Heart left ventricle (tissue), 16 donors: ENCODE measurements at regions of chr10 and their contacts with region 1.

Region 1: GRCh38 chr10:59580026-59580863 is 129.4 kb downstream of the SLC16A9 start:
- DNase-seq: no peak
- ATAC-seq: peak in 2 of 4 donors; percentile 54 to 57
- H3K4me3 ChIP-seq: no peak overlapping the region
- H3K27ac ChIP-seq: peak overlapping the region in 4 of 12 donors; percentile 21 to 51 (median 36)
- H3K4me1 ChIP-seq: peaks cover 0 to 21% (median 0%) of the 10 kb centered on the region in 12 donors
- H3K27me3 ChIP-seq: no peaks in the 10 kb centered on the region
- CTCF ChIP-seq: peak; percentile 31 to 71 (median 46)
- POLR2A ChIP-seq: no peak

Region 2: DNA sequence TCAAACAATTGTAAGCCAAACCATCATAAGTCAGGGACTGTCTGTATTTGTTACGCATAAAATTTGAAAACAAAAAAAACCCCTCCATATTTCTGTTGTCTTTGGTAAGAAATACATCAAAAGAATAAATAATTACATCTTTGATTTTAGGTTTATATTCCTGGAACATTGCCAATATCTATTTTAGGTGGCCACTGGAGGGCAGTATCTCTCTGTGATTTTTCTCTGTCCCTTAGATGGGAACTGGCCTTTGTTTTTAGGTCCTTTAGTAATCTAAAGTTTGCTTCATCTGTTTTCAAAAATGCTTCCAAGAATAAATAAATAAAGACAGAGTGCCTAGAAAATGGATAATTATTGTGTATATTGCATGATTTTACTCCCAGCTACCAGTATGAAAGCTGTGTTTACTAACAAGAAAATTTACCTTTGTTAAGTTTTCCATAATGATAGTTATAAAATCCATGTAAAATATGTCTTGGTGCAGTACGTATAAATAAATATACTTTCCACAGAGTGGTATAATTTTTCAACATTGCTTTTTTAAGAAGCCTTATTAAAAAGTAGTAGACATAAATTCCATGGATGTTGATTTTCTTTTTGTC is 339.6 kb before region 1 on chr10:
- intact Hi-C with region 1: loop called (anchors 1 to 5 kb)
- DNase-seq: peak in 1 of 5 donors; percentile 9
- ATAC-seq: no peak
- H3K4me3 ChIP-seq: no peak overlapping the region
- H3K27ac ChIP-seq: no peak overlapping the region
- H3K4me1 ChIP-seq: peaks cover 0 to 4% (median 0%) of the 10 kb centered on the region in 12 donors
- H3K27me3 ChIP-seq: no peaks in the 10 kb centered on the region
- CTCF ChIP-seq: peak; percentile 45 to 85 (median 66)
- POLR2A ChIP-seq: no peak

Region 3: GRCh38 chr10:59362144-59362958 is 217.9 kb before region 1 on chr10 and contains the start of gene FAM13C:
- intact Hi-C with region 1: loop called in 1 of 10 experiments (anchors 10 kb)
- DNase-seq: peak; percentile 55 to 83 (median 67)
- ATAC-seq: peak; percentile 63 to 90 (median 82)
- H3K4me3 ChIP-seq: peak within 1 kb of the TSS; percentile 47 to 78 (median 64)
- H3K27ac ChIP-seq: peak within 1 kb of the TSS; percentile 64 to 94 (median 86)
- H3K4me1 ChIP-seq: peaks cover 6 to 60% (median 33%) of the 10 kb centered on the region in 12 donors
- H3K27me3 ChIP-seq: peaks cover 0 to 4% (median 0%) of the 10 kb centered on the region in 9 donors
- CTCF ChIP-seq: peak in 1 of 12 donors; percentile 5
- POLR2A ChIP-seq: no peak
- total RNA-seq, gene FAM13C: 3.6 to 12.4 (median 8.5) TPM

Region 4: DNA sequence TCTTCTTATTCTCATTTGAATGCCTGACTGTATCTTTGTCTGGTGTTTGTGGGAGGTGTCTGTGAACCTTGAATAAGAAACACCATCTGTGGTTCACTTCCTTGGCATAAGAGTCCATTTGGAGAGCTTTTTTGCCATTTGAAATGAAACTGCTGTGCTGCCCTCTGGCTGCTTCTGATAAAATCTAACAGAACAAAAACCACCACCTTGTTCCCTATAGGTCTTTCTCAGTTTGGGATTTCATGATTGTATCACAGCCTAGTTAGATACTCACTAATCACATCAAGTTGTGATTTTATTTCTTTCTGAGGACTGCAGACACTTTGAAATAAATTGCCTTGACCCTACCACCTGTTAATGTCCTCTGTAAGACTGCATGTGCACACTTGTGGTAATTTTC is 115.2 kb before region 1 on chr10:
- intact Hi-C with region 1: loop called in 2 of 10 experiments (anchors 10 kb)
- DNase-seq: no peak
- ATAC-seq: peak in 1 of 4 donors; percentile 52
- H3K4me3 ChIP-seq: no peak overlapping the region
- H3K27ac ChIP-seq: no peak overlapping the region
- H3K4me1 ChIP-seq: peaks cover 0 to 11% (median 0%) of the 10 kb centered on the region in 12 donors
- H3K27me3 ChIP-seq: no peaks in the 10 kb centered on the region
- CTCF ChIP-seq: peak in 10 of 12 donors; percentile 22 to 63 (median 44)
- POLR2A ChIP-seq: no peak

Region 5: DNA sequence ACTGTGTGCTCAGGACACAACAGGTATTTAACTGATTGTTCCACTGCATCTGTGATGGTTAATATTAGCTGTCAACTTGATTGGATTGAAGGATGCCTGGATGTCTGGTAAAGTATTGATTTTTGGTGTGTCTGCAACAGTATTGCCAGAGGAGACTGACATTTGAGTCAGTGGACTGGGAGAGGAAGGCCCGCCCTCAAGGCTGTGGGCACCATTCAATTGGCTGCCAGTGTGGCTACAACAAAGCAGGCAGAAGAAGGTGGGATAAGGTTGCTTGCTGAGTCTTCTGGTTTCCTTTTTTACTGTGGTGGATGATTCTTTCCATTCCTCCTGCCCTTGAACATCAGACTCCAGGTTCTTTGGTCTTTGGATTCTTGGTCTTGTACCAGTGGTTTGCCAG is 80.8 kb before region 1 on chr10:
- intact Hi-C with region 1: no loop called
- DNase-seq: no peak
- ATAC-seq: no peak
- H3K4me3 ChIP-seq: no peak overlapping the region
- H3K27ac ChIP-seq: no peak overlapping the region
- H3K4me1 ChIP-seq: no peaks in the 10 kb centered on the region
- H3K27me3 ChIP-seq: no peaks in the 10 kb centered on the region
- CTCF ChIP-seq: no peak
- POLR2A ChIP-seq: no peak

Region 6: GRCh38 chr10:59678884-59679301 is 98.6 kb after region 1 on chr10:
- intact Hi-C with region 1: no loop called
- DNase-seq: no peak
- ATAC-seq: no peak
- H3K4me3 ChIP-seq: no peak overlapping the region
- H3K27ac ChIP-seq: no peak overlapping the region
- H3K4me1 ChIP-seq: peaks cover 0 to 4% (median 0%) of the 10 kb centered on the region in 12 donors
- H3K27me3 ChIP-seq: no peaks in the 10 kb centered on the region
- CTCF ChIP-seq: no peak
- POLR2A ChIP-seq: no peak

Region 7: GRCh38 chr10:59719374-59719773 is 139.1 kb after region 1 on chr10:
- intact Hi-C with region 1: no loop called
- DNase-seq: no peak
- ATAC-seq: no peak
- H3K4me3 ChIP-seq: no peak overlapping the region
- H3K27ac ChIP-seq: no peak overlapping the region
- H3K4me1 ChIP-seq: no peaks in the 10 kb centered on the region
- H3K27me3 ChIP-seq: peaks cover 0 to 3% (median 0%) of the 10 kb centered on the region in 9 donors
- CTCF ChIP-seq: peak in 3 of 12 donors; percentile 6 to 28 (median 20)
- POLR2A ChIP-seq: no peak